ENCODE measurements at regions of chr20 and their contacts with region 1.

Region 1: GRCh38 chr20:10731190-10731965 is 57.6 kb upstream of the JAG1 start:
- DNase-seq: peak in 1 of 10 donors; percentile 63

Region 2: DNA sequence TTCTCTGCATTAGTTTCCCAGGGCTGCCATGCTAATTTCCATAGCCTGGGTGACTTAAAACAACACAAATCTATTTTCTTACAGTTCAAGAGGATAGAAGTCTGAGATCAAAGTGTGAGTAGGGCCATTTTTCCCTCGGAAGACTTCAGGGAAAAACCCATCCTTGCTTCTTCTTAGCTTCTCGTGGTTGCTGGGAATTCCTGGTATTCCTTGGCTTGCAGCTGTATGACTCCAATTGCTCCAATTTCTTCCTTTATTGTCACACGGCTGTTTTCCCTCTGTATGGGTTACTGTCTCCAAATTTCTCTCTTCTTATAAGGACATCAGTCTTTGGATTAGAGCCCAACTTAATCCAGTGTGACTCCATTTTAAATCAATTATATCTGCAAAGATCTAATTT is 70.9 kb after region 1 on chr20:
- intact Hi-C with region 1: loop called (anchors 10 kb)
- DNase-seq: no peak